ENCODE measurements at regions of chr11 and their contacts with region 1.

Region 1: DNA sequence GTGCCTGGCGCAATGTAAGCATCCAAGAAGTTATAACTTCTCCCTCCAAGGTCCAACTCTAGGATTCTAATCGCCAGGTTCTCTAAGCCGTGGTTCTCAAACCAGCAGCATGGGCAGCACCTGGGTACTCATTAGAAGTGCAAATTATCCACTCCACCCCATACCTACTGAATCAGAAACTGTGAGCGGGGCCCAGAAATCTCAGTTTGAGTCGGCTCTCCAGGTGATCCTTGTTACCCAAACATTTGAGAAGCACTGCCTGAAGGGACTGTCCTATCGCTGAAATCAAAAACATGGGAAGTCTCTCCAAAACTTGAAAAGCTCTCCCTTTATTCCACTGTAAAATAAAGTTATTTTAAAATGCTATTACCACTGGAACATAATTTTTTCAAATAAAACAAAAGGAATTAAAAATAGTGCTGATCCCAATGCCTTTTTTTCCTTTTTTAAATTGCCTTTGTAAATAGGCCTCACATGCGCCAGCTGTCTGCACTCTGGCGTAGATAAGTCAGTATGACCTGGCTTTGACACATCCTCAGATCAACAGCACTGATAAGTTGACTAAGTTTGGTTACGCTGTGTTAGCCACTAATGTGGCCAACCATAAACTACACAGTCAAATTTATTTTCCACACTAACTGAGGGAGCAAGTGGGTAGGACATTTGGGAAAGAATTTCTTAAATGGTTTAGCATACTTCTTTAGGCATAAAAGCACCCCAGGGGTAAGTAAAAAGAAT is 8.4 kb upstream of the CTR9 start:
- DNase-seq: peak; percentile 53
- H3K4me3 Mint-ChIP-seq: no peak overlapping the region
- H3K27ac Mint-ChIP-seq: no peak overlapping the region
- H3K4me1 Mint-ChIP-seq: peaks cover 29% of the 10 kb centered on the region
- H3K27me3 Mint-ChIP-seq: no peaks in the 10 kb centered on the region

Region 2: DNA sequence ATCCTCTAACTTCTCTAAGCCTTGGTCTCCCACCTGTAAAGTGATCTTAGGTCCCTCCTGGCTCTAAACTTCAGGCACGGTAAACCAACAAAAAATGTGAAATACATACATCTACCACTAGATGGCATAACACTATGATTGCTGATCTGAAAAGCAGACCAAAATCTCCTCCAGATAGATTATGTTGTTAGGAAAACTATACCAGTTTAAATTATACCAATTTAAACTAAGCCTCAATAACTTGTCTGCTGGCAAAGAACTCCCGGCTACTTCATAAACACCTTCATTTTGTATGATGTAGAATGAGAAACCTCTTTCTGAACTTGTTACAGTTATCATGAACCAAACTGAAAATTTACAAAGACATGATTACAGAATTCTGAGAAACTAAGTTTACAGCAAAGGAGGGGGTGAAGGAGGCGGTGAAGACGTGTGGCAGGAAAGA is 534.5 kb before region 1 on chr11:
- CTCF ChIA-PET with region 1: no interaction called
- intact Hi-C with region 1: loop called (anchors 10 kb)
- DNase-seq: no peak
- H3K4me3 Mint-ChIP-seq: no peak overlapping the region
- H3K27ac Mint-ChIP-seq: no peak overlapping the region
- H3K4me1 Mint-ChIP-seq: no peaks in the 10 kb centered on the region
- H3K27me3 Mint-ChIP-seq: no peaks in the 10 kb centered on the region

Region 3: GRCh38 chr11:10526974-10527918 is 215.4 kb before region 1 on chr11:
- CTCF ChIA-PET with region 1: no interaction called
- intact Hi-C with region 1: loop called (anchors 10 kb)
- DNase-seq: no peak
- H3K4me3 Mint-ChIP-seq: no peak overlapping the region
- H3K27ac Mint-ChIP-seq: peak overlapping the region; percentile 70
- H3K4me1 Mint-ChIP-seq: peaks cover 19% of the 10 kb centered on the region
- H3K27me3 Mint-ChIP-seq: no peaks in the 10 kb centered on the region